Activated B cell treated with CpG ODN at 0.5 μM for 24 hours (primary cell): ENCODE measurements at regions of chr10 and their contacts with region 1.

Region 1: GRCh38 chr10:86411281-86411841 is 44.8 kb upstream of the GRID1 start:
- DNase-seq: no peak
- ATAC-seq: no peak
- H3K4me3 Mint-ChIP-seq: peak overlapping the region; percentile 62
- H3K27ac Mint-ChIP-seq: peak overlapping the region; percentile 83
- H3K4me1 Mint-ChIP-seq: peaks cover 50% of the 10 kb centered on the region
- H3K27me3 Mint-ChIP-seq: no peaks in the 10 kb centered on the region
- CTCF ChIP-seq: no peak

Region 2: GRCh38 chr10:86451604-86451960 is 40.2 kb after region 1 on chr10:
- CTCF ChIA-PET with region 1: no interaction called
- POLR2A ChIA-PET with region 1: no interaction called
- intact Hi-C with region 1: loop called (anchors 2 kb)
- DNase-seq: no peak
- ATAC-seq: peak; percentile 31
- H3K4me3 Mint-ChIP-seq: no peak overlapping the region
- H3K27ac Mint-ChIP-seq: no peak overlapping the region
- H3K4me1 Mint-ChIP-seq: peaks cover 41% of the 10 kb centered on the region
- H3K27me3 Mint-ChIP-seq: no peaks in the 10 kb centered on the region
- CTCF ChIP-seq: no peak

Region 3: DNA sequence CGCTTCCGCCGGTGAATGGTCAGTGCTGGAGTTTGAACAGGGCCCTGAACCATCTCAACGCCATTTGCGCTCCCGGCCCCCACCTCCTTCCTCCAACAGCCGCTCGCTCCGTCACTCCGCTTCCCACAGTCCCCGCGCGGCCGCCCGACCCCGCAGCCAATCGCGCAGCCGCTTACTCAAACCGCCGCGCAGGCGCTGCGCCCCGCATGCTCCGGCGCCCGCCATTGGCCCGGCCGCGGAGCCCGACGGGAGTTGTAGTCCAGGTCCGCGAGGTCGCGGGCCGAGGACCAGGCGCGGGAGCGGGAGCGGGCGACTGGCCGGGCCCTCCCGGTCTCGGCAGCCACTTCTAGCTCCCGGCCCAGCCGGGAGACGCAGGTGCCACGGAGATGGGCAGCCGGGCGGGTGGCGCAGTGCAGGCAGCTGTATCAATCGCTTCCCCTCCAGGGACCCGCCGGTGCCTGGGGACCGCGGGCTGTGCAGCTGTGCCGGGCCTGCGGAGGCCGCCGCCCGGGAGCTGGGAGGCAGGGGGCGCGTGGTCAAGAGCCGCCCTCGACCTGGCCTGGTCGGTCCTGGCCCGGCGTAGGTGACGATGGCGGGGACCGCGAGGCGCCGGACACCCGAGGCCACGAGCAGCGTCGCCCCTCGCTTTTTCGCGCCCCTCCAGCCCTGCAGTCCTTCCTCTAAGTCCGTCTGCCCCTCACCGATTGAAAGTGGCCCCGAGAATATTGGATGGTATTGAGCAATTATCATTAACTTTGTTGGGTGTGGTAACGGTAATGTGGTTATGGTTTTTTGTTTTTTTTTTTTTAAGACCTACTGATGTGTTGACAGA is 110.5 kb after region 1 on chr10 and contains the start of gene WAPL:
- CTCF ChIA-PET with region 1: no interaction called
- POLR2A ChIA-PET with region 1: no interaction called
- intact Hi-C with region 1: loop called (anchors 1 kb)
- DNase-seq: peak; percentile 94
- ATAC-seq: peak; percentile 91
- H3K4me3 Mint-ChIP-seq: peak within 1 kb of the TSS; percentile 92
- H3K27ac Mint-ChIP-seq: peak within 1 kb of the TSS; percentile 80
- H3K4me1 Mint-ChIP-seq: peaks cover 41% of the 10 kb centered on the region
- H3K27me3 Mint-ChIP-seq: peaks cover 5% of the 10 kb centered on the region
- CTCF ChIP-seq: no peak
- total RNA-seq, gene WAPL: 35.9 and 38.5 TPM in 2 replicates

Region 4: DNA sequence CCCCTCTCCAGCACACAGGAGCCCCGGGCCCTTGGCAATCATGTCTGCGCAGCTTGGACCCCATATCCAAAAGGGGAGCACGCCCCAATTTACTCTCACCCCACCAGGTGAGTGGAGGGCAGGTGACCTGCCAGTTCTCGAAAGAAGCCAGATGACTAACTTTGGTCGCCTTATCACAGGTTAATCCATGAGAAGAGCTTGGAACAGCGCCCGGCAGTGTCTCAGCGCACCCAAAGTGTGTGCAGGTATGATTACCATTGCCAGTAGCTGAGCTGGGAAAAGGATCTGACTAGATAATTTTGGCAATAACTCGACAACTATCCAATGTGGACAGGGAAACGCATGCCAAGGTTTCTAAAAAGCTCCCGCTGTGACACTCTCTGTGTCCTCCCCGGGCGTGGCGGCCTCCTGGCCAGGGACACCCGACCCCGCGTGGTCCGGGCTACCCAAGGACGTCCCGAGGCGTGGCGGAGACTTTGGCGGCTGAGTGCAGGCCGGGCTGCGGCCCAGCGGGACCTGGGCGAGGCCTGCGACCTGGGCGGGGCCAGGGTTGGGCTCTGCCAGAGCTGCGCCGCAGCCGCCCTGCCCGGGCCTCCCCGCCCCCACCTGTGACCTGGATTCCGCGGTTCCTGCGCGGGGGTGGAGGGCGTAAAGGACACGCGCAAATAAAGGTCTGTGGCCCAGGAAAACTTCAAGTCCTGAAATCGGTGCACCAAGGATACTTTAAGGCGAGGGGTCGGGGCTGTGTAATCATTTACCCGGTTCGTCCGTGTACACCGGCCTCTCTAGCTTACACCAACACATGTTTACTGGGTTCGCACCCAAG is 123.9 kb after region 1 on chr10:
- CTCF ChIA-PET with region 1: no interaction called
- POLR2A ChIA-PET with region 1: interaction called, 11 read pairs
- intact Hi-C with region 1: no loop called
- DNase-seq: peak; percentile 41
- ATAC-seq: peak; percentile 85
- H3K4me3 Mint-ChIP-seq: peak overlapping the region; percentile 83
- H3K27ac Mint-ChIP-seq: peak overlapping the region; percentile 68
- H3K4me1 Mint-ChIP-seq: peaks cover 13% of the 10 kb centered on the region
- H3K27me3 Mint-ChIP-seq: peaks cover 3% of the 10 kb centered on the region
- CTCF ChIP-seq: no peak

Region 5: GRCh38 chr10:86755740-86756510 is 344.6 kb after region 1 on chr10:
- CTCF ChIA-PET with region 1: no interaction called
- POLR2A ChIA-PET with region 1: no interaction called
- intact Hi-C with region 1: loop called (anchors 5 kb)
- DNase-seq: peak; percentile 90
- ATAC-seq: peak; percentile 94
- H3K4me3 Mint-ChIP-seq: peak overlapping the region; percentile 86
- H3K27ac Mint-ChIP-seq: peak overlapping the region; percentile 63
- H3K4me1 Mint-ChIP-seq: peaks cover 40% of the 10 kb centered on the region
- H3K27me3 Mint-ChIP-seq: peaks cover 15% of the 10 kb centered on the region
- CTCF ChIP-seq: no peak

Region 6: DNA sequence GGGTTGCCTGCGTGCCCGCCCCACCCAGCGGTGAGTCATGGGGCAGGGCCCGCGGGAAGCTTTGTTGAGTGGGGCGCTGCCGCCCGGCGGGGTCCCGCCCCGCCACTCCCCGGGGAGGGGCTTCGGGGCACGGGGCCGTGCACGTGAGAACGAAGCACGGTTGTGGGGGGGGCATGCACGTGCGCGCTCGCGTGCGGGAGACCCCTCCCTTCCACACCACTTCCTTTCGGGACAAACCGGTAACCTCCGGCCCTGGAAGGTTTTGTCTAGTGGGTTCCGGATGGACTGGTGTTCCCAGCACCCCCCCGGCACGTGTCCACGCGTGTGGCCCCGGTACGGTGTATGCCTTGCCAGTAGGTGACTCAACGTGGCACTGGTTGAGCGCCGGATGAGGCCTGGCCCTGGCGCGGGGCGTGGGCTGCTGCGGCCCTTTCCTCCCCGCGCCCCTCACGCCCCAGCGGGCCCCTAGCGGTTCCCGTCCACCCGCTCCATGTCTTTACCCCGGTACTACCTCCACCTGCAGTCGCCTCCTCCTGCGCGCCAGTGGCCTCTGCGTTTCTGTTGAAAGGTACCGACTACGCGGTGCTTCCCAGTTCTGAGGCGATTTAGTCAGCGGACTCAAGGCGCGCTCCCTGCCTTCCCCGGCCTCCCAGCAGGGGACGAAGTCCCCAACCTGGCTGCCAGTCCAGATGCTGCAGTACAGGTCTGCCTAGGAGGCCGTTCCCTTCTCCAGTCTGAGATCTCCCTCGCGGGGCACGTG is 560.1 kb after region 1 on chr10:
- CTCF ChIA-PET with region 1: no interaction called
- POLR2A ChIA-PET with region 1: no interaction called
- intact Hi-C with region 1: loop called (anchors 2 kb)
- DNase-seq: peak; percentile 91
- ATAC-seq: peak; percentile 88
- H3K4me3 Mint-ChIP-seq: peak overlapping the region; percentile 87
- H3K27ac Mint-ChIP-seq: peak overlapping the region; percentile 86
- H3K4me1 Mint-ChIP-seq: peaks cover 26% of the 10 kb centered on the region
- H3K27me3 Mint-ChIP-seq: peaks cover 4% of the 10 kb centered on the region
- CTCF ChIP-seq: no peak

Region 7: GRCh38 chr10:87094373-87095235 is 683.2 kb after region 1 on chr10 and contains the starts of genes GLUD1 and SHLD2:
- CTCF ChIA-PET with region 1: no interaction called
- POLR2A ChIA-PET with region 1: no interaction called
- intact Hi-C with region 1: loop called (anchors 2 kb)
- DNase-seq: peak; percentile 89
- ATAC-seq: peak; percentile 76
- H3K4me3 Mint-ChIP-seq: peak within 1 kb of the TSS; percentile 92
- H3K27ac Mint-ChIP-seq: peak within 1 kb of the TSS; percentile 91
- H3K4me1 Mint-ChIP-seq: peaks cover 42% of the 10 kb centered on the region
- H3K27me3 Mint-ChIP-seq: no peaks in the 10 kb centered on the region
- CTCF ChIP-seq: no peak
- total RNA-seq, gene GLUD1: 96.5 and 98.4 TPM in 2 replicates
- total RNA-seq, gene SHLD2: 29.3 and 29.6 TPM in 2 replicates